HepG2 (cell line): ENCODE measurements at regions of chr19 and their contacts with region 1.

Region 1: GRCh38 chr19:35931161-35931873 is 4.9 kb upstream of the LRFN3 start:
- DNase-seq: peak; percentile 98
- ATAC-seq: peak; percentile 97
- H3K4me3 ChIP-seq: peak overlapping the region; percentile 7 to 61 (median 38); a peak in 4 of 6 replicates
- H3K27ac ChIP-seq: no peak overlapping the region
- H3K4me1 ChIP-seq: peaks cover 21% of the 10 kb centered on the region
- H3K27me3 ChIP-seq: no peaks in the 10 kb centered on the region; a peak in 2 of 5 replicates
- CTCF ChIP-seq: peak; percentile 100
- EP300 ChIP-seq: no peak; a peak in 1 of 4 replicates
- POLR2A ChIP-seq: peak; percentile 73 to 98
- RAD21 ChIP-seq: peak; percentile 99

Region 2: DNA sequence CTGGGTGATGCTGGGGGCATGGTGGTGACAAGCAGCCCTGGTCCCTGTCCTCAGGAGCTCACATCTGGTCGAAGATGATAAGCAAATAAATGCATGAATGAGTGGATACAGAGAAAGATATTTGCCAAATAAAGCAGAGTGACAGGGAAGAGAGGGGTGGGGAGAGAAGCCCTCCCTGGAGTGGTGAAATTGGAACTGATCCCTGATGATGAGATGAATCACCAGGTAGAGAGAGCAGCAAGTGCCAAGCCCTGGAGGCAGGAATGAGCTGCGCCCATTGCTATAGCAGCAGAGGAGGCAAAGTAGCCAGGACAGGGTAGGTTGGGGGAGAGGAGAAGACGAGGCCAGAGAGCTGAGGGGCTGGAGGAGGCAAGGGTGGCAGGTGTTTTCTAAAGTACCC is 763.1 kb before region 1 on chr19:
- CTCF ChIA-PET with region 1: no interaction called
- POLR2A ChIA-PET with region 1: no interaction called
- in situ Hi-C with region 1: no loop called
- intact Hi-C with region 1: no loop called
- DNase-seq: no peak
- ATAC-seq: no peak
- H3K4me3 ChIP-seq: no peak overlapping the region
- H3K27ac ChIP-seq: no peak overlapping the region
- H3K4me1 ChIP-seq: no peaks in the 10 kb centered on the region
- H3K27me3 ChIP-seq: no peaks in the 10 kb centered on the region; a peak in 1 of 5 replicates
- CTCF ChIP-seq: no peak
- EP300 ChIP-seq: no peak
- POLR2A ChIP-seq: no peak
- RAD21 ChIP-seq: no peak

Region 3: GRCh38 chr19:35693830-35694599 is 237.3 kb before region 1 on chr19:
- CTCF ChIA-PET with region 1: interaction called, 11 read pairs
- POLR2A ChIA-PET with region 1: no interaction called
- in situ Hi-C with region 1: no loop called
- intact Hi-C with region 1: no loop called
- DNase-seq: peak; percentile 81
- ATAC-seq: peak; percentile 96
- H3K4me3 ChIP-seq: no peak overlapping the region
- H3K27ac ChIP-seq: no peak overlapping the region
- H3K4me1 ChIP-seq: peaks cover 32% of the 10 kb centered on the region
- H3K27me3 ChIP-seq: no peaks in the 10 kb centered on the region
- CTCF ChIP-seq: peak; percentile 97
- EP300 ChIP-seq: no peak
- POLR2A ChIP-seq: no peak
- RAD21 ChIP-seq: peak; percentile 98

Region 4: GRCh38 chr19:35748106-35749020 is 183.0 kb before region 1 on chr19 and contains the start of gene LIN37:
- CTCF ChIA-PET with region 1: no interaction called
- POLR2A ChIA-PET with region 1: interaction called, 5 read pairs
- in situ Hi-C with region 1: no loop called
- intact Hi-C with region 1: loop called (anchors 1 kb)
- DNase-seq: peak; percentile 99
- ATAC-seq: peak; percentile 91
- H3K4me3 ChIP-seq: peak within 1 kb of the TSS; percentile 89 to 100 (median 89)
- H3K27ac ChIP-seq: peak within 1 kb of the TSS; percentile 68
- H3K4me1 ChIP-seq: peaks cover 41% of the 10 kb centered on the region
- H3K27me3 ChIP-seq: no peaks in the 10 kb centered on the region; a peak in 1 of 5 replicates
- CTCF ChIP-seq: no peak
- EP300 ChIP-seq: no peak
- POLR2A ChIP-seq: peak; percentile 83 to 93
- RAD21 ChIP-seq: no peak
- total RNA-seq, gene LIN37: 3.5 and 6.3 TPM in 2 replicates

Region 5: GRCh38 chr19:35882114-35882832 is 49.0 kb before region 1 on chr19:
- CTCF ChIA-PET with region 1: interaction called, 36 read pairs
- POLR2A ChIA-PET with region 1: interaction called, 3 read pairs
- in situ Hi-C with region 1: loop called (anchors 10 kb)
- intact Hi-C with region 1: loop called (anchors 1 kb)
- DNase-seq: peak; percentile 64
- ATAC-seq: no peak
- H3K4me3 ChIP-seq: no peak overlapping the region
- H3K27ac ChIP-seq: no peak overlapping the region
- H3K4me1 ChIP-seq: no peaks in the 10 kb centered on the region
- H3K27me3 ChIP-seq: no peaks in the 10 kb centered on the region
- CTCF ChIP-seq: peak; percentile 67
- EP300 ChIP-seq: no peak
- POLR2A ChIP-seq: no peak
- RAD21 ChIP-seq: 0 out of 2 replicates have a peak, but pooled peaks have one; percentile 17

Region 6: DNA sequence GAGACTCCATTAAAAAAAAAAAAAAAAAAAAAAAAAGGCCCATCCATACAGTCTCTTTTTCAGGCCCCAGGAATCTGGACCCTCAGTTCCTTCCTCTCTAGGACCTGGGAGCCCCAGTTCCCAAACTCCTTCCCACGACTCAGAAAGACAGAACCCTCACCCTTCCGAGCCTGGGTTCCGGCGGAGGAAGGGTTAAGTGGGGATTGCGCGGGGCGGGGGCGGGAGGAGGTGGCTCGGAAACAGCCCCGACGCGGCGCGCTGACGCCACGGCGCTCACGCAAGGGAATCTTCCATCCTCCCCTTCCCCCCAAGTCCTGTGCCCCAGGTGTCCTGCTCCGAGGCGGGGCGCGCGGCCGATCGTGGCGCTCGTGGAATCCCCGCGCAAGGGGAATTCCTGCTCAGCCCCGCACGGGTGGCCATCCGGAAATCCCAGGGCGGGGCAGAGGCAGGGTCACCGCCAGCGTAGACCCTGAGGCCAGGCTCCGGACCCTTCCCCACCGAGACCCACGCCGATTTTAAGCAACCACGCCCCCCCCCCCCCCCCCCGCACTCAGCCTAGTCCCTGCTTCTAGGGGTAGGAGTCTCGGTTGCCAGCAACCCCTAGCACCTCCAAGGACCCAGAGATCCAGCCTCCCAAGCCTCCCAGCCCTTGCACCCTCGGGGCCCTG is 31.6 kb before region 1 on chr19:
- CTCF ChIA-PET with region 1: no interaction called
- POLR2A ChIA-PET with region 1: interaction called, 4 read pairs
- in situ Hi-C with region 1: no loop called
- intact Hi-C with region 1: loop called (anchors 5 kb)
- DNase-seq: peak; percentile 47
- ATAC-seq: peak; percentile 80
- H3K4me3 ChIP-seq: peak overlapping the region; percentile 90 to 92 (median 92)
- H3K27ac ChIP-seq: peak overlapping the region; percentile 55
- H3K4me1 ChIP-seq: peaks cover 42% of the 10 kb centered on the region
- H3K27me3 ChIP-seq: 0 out of 5 replicates have a peak, but pooled peaks cover 0 to 9% of the 10 kb centered on the region in 2 experiments
- CTCF ChIP-seq: no peak
- EP300 ChIP-seq: peak in 1 of 2 experiments; percentile 25; a peak in 1 of 4 replicates
- POLR2A ChIP-seq: peak in 1 of 2 experiments; percentile 57; a peak in 2 of 4 replicates
- RAD21 ChIP-seq: no peak